Activated CD4-positive, alpha-beta T cell treated with anti-CD3 and anti-CD28 coated beads for 36 hours (primary cell): ENCODE measurements at regions of chr5 and their contacts with region 1.

Region 1: GRCh38 chr5:128213340-128213739 is 129.8 kb downstream of the SLC12A2 start:
- DNase-seq: peak; percentile 68
- ATAC-seq: no peak
- H3K4me3 Mint-ChIP-seq: no peak overlapping the region
- H3K27ac Mint-ChIP-seq: no peak overlapping the region
- H3K4me1 Mint-ChIP-seq: no peaks in the 10 kb centered on the region
- H3K27me3 Mint-ChIP-seq: peaks cover 5% of the 10 kb centered on the region

Region 2: DNA sequence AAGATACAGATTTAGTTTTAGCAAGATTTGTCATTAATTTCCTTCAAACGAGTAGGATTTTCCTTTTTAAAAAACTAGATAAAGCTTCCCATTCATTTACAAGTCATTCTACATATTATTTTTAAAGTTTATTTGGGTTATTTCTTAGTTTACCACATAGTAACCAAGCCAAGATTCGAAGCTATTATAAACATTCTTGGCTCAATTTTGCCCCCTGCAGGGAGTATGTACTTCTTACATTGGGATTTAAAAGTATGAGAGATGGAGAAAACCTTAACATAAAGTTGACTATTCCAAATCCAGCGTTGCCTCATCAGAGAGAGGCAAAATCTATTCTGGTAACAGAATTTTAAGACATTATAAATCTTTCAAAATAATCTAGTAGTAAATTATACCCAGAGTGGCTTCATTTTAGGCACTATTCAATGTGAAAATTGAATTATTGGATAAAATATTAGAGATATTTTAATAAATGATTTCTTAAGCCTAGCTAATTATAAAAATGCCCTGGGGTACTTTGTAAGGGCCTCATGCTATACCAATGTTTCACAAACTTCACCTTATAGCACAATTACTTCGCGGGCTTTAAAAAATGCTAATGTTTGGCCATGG is 285.6 kb after region 1 on chr5:
- CTCF ChIA-PET with region 1: interaction called, 5 read pairs
- POLR2A ChIA-PET with region 1: no interaction called
- intact Hi-C with region 1: loop called (anchors 1 to 2 kb)
- DNase-seq: no peak
- ATAC-seq: no peak
- H3K4me3 Mint-ChIP-seq: no peak overlapping the region
- H3K27ac Mint-ChIP-seq: no peak overlapping the region
- H3K4me1 Mint-ChIP-seq: no peaks in the 10 kb centered on the region
- H3K27me3 Mint-ChIP-seq: no peaks in the 10 kb centered on the region

Region 3: DNA sequence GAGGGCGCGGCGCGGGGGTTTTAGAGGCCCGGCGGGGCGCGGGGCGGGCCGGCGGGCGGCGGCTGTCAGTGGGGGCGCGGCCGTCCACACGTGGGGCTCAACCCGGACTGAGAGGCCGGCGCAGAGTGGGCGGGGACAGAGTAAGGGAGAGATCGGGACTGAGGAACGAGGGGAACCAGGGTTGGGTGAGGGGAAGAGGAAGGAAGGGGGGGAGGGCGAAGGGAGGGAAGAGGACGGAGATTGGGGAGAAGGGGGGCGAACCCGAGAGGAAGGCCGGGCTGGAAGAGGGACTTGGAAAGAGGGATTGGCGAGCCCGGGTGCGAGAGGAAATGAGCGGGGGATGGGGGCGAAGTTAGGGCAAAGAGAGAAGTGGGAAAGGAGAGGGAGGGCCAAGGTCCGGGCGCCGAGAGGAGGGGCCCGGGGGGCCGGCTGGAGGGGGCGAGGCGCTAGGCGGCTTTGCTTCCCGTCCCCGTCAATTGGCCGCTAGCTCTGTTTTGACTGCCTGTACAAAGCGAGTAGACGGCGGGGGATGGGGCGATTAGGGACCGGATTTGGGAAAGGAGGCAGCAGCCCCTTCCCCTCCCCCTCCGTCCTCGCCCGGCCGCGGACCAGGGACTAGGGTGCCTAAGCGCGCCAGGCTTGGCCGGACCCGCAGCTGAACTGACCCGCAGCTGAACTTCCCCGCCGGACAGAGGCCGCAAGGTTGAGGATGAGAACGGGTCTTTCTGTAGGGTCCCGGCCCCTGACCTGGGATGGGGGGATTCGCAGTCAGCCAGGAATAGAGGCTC is 325.1 kb after region 1 on chr5:
- CTCF ChIA-PET with region 1: no interaction called
- POLR2A ChIA-PET with region 1: no interaction called
- intact Hi-C with region 1: no loop called
- DNase-seq: peak; percentile 8
- ATAC-seq: no peak
- H3K4me3 Mint-ChIP-seq: no peak overlapping the region
- H3K27ac Mint-ChIP-seq: no peak overlapping the region
- H3K4me1 Mint-ChIP-seq: peaks cover 2% of the 10 kb centered on the region
- H3K27me3 Mint-ChIP-seq: peaks cover 35% of the 10 kb centered on the region

Region 4: GRCh38 chr5:128674825-128675446 is 461.6 kb after region 1 on chr5:
- CTCF ChIA-PET with region 1: interaction called, 19 read pairs
- POLR2A ChIA-PET with region 1: no interaction called
- intact Hi-C with region 1: loop called (anchors 1 kb)
- DNase-seq: peak; percentile 67
- ATAC-seq: peak; percentile 58
- H3K4me3 Mint-ChIP-seq: no peak overlapping the region
- H3K27ac Mint-ChIP-seq: no peak overlapping the region
- H3K4me1 Mint-ChIP-seq: no peaks in the 10 kb centered on the region
- H3K27me3 Mint-ChIP-seq: peaks cover 9% of the 10 kb centered on the region

Region 5: GRCh38 chr5:128844354-128844923 is 631.1 kb after region 1 on chr5:
- CTCF ChIA-PET with region 1: no interaction called
- POLR2A ChIA-PET with region 1: no interaction called
- intact Hi-C with region 1: loop called (anchors 1 to 5 kb)
- DNase-seq: no peak
- ATAC-seq: no peak
- H3K4me3 Mint-ChIP-seq: no peak overlapping the region
- H3K27ac Mint-ChIP-seq: no peak overlapping the region
- H3K4me1 Mint-ChIP-seq: no peaks in the 10 kb centered on the region
- H3K27me3 Mint-ChIP-seq: no peaks in the 10 kb centered on the region

Region 6: DNA sequence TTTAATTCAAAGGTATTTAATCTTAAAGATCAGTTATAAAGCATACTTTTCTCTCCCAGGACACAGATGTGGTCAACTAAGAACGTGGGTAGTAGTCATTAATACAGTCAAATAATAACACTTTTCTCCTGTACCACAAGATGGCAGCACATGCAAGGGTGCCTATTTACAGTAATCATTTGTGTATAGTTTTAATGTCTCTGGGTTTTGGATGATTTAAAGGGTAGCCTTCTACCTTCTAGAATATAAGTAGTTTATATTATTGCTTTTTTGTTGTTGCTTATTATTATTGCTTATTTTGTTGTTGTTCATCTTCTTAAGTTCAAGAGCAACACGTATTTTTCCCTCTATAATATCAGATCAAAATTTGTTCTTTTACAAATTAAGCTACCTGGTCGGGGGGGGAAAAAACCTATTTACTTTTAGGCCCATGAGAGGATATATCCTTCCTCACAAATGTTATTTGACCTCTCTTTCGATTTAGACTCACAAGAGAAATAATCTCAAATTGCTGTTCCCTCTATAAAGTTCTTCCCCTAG is 692.3 kb after region 1 on chr5:
- CTCF ChIA-PET with region 1: no interaction called
- POLR2A ChIA-PET with region 1: no interaction called
- intact Hi-C with region 1: loop called in 1 of 2 experiments (anchors 5 kb)
- DNase-seq: peak; percentile 52
- ATAC-seq: peak; percentile 47
- H3K4me3 Mint-ChIP-seq: no peak overlapping the region
- H3K27ac Mint-ChIP-seq: no peak overlapping the region
- H3K4me1 Mint-ChIP-seq: no peaks in the 10 kb centered on the region
- H3K27me3 Mint-ChIP-seq: peaks cover 4% of the 10 kb centered on the region

Region 7: DNA sequence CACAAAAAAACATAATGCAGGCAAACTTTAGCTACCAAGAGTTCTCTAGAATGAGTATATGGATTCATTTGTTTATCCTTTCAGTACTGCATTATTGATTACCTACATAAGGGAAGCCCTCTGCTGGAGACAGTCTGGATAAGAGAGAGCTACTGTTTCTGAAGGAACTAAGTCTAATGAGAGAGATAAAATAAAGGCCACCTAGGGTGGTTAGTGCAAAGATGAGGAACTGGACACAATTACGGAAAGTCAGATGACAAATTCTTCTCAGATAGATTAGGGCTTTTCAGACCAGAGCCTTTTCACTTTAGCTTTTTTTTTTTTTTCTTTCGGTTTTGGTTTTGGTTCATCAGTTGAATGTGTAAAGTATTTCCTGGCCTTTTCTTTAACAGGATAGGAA is 912.5 kb after region 1 on chr5:
- CTCF ChIA-PET with region 1: no interaction called
- POLR2A ChIA-PET with region 1: no interaction called
- intact Hi-C with region 1: loop called in 1 of 2 experiments (anchors 10 kb)
- DNase-seq: no peak
- ATAC-seq: peak; percentile 57
- H3K4me3 Mint-ChIP-seq: no peak overlapping the region
- H3K27ac Mint-ChIP-seq: peak overlapping the region; percentile 42
- H3K4me1 Mint-ChIP-seq: peaks cover 11% of the 10 kb centered on the region
- H3K27me3 Mint-ChIP-seq: no peaks in the 10 kb centered on the region

Region 8: GRCh38 chr5:129852747-129853352 is 1639.5 kb after region 1 on chr5:
- CTCF ChIA-PET with region 1: no interaction called
- POLR2A ChIA-PET with region 1: no interaction called
- intact Hi-C with region 1: loop called (anchors 5 kb)
- DNase-seq: peak; percentile 87
- ATAC-seq: peak; percentile 85
- H3K4me3 Mint-ChIP-seq: no peak overlapping the region
- H3K27ac Mint-ChIP-seq: no peak overlapping the region
- H3K4me1 Mint-ChIP-seq: no peaks in the 10 kb centered on the region
- H3K27me3 Mint-ChIP-seq: peaks cover 14% of the 10 kb centered on the region